ENCODE measurements at regions of chr5 and their contacts with region 1.

Region 1: GRCh38 chr5:126695091-126695490 is 81.8 kb upstream of the LMNB1 start:
- DNase-seq: no peak
- H3K4me3 ChIP-seq: no peak overlapping the region
- H3K27ac ChIP-seq: no peak overlapping the region
- H3K4me1 ChIP-seq: 0 out of 2 replicates have a peak, but pooled peaks cover 5% of the 10 kb centered on the region
- H3K27me3 ChIP-seq: no peaks in the 10 kb centered on the region
- CTCF ChIP-seq: no peak

Region 2: DNA sequence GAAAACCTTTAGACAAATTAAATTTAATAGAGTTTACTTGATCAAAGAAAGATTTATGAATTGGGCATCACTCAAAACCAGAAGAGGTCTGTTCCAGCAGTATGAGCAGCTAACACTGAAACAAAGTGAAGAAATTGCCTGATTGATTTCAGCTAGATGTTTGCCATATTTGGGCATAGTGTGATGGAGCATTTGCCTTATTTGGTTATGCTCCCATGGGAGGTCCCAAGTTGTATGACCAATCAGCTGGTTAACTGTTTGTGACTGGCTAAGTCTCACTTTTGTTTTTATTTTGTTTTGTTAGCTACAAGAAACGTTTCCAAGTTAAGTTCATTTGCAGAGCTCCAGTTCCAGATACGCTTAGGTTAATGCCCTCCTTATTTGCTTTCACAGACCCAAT is 28.6 kb after region 1 on chr5:
- CTCF ChIA-PET with region 1: no interaction called
- POLR2A ChIA-PET with region 1: interaction called, 17 read pairs
- intact Hi-C with region 1: no loop called
- DNase-seq: no peak
- H3K4me3 ChIP-seq: no peak overlapping the region
- H3K27ac ChIP-seq: no peak overlapping the region
- H3K4me1 ChIP-seq: no peaks in the 10 kb centered on the region
- H3K27me3 ChIP-seq: no peaks in the 10 kb centered on the region
- CTCF ChIP-seq: no peak

Measured in PC-9 (cell line).